ENCODE measurements at regions of chr4 and their contacts with region 1.

Region 1: DNA sequence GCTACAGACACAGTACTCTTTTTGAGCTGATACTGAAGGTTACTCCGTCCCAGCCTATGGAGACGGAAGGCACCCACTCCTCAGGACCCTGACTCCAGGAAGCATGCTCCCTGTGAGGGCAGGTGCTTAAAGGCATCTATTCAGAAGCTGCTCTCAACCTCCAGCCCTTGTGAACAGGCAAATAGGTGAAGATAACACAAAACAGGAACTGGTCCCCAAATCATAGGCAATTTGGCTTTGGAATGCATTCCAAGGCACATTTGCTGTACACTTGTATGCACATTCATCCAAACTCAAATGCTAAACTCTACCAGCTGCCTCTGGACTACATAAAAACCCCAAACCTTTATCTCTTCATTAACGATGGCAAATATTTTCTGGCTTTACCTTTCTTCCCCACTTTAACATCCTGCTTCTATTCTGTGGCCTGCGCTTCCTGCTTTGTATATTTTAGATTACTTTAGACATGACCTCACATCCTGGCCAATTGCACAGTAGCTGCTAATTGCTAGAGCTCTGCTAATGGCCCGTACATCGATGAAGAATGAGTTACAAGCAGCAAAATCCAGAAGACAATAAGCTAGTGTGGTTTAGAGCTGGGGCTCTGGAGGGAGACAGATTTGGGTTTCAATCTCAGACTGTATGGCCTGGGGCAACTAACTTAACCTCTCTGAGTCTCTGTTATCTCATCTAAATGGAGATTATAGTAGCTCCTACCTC is 3.2 kb downstream of the SEL1L3 start:
- DNase-seq: peak in 6 of 10 donors; percentile 21 to 67 (median 48)
- ATAC-seq: peak; percentile 67 to 79
- H3K4me3 Mint-ChIP-seq: peak overlapping the region; percentile 38 to 100 (median 96)
- H3K27ac Mint-ChIP-seq: peak overlapping the region; percentile 87 to 99 (median 96)
- H3K4me1 Mint-ChIP-seq: peaks cover 36 to 79% (median 74%) of the 10 kb centered on the region in 4 donors
- H3K27me3 Mint-ChIP-seq: peaks cover 0 to 2% (median 0%) of the 10 kb centered on the region in 5 donors

Region 2: GRCh38 chr4:25913851-25914669 is 54.5 kb after region 1 on chr4 and contains the start of gene SMIM20:
- POLR2A ChIA-PET with region 1: interaction called, 22 read pairs
- DNase-seq: peak; percentile 83 to 94 (median 88)
- ATAC-seq: peak; percentile 88 to 89
- H3K4me3 Mint-ChIP-seq: peak within 1 kb of the TSS; percentile 92 to 98 (median 96)
- H3K27ac Mint-ChIP-seq: peak within 1 kb of the TSS; percentile 94 to 99 (median 98)
- H3K4me1 Mint-ChIP-seq: peaks cover 17 to 40% (median 25%) of the 10 kb centered on the region in 4 donors
- H3K27me3 Mint-ChIP-seq: no peaks in the 10 kb centered on the region
- polyA plus RNA-seq, gene SMIM20: 64.1 to 76.4 (median 65.8) TPM